ENCODE measurements at regions of chr6 and their contacts with region 1.

Region 1: DNA sequence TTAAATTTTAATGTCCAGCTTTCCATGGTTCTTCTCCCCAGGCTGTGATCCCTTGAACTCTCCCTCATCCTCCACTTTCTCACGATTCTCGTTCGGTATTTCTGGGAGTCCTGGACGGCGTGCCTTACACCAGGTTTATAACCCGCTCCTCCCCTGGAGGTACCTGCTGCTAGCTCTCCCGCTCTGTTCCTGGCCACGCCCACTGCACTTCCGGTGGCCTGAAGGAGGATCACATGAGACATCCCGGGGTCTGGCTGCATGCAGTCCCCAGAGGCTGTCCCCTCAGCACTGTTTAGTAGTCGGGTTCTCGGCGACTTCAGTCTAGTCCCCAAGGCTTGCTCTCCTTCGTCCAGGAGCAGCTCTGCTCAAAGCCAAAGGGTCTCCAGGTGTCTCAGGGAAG is 28.4 kb upstream of the GCLC start:
- DNase-seq: no peak
- H3K4me3 ChIP-seq: no peak overlapping the region
- H3K27ac ChIP-seq: no peak overlapping the region
- H3K4me1 ChIP-seq: no peaks in the 10 kb centered on the region
- H3K27me3 ChIP-seq: no peaks in the 10 kb centered on the region
- CTCF ChIP-seq: no peak
- POLR2A ChIP-seq: no peak

Region 2: GRCh38 chr6:53587291-53587690 is 14.0 kb after region 1 on chr6:
- CTCF ChIA-PET with region 1: no interaction called
- POLR2A ChIA-PET with region 1: interaction called, 11 read pairs
- dilution Hi-C with region 1: no loop called
- intact Hi-C with region 1: no loop called
- DNase-seq: no peak
- H3K4me3 ChIP-seq: no peak overlapping the region
- H3K27ac ChIP-seq: no peak overlapping the region
- H3K4me1 ChIP-seq: no peaks in the 10 kb centered on the region
- H3K27me3 ChIP-seq: peaks cover 1 to 2% of the 10 kb centered on the region in 2 experiments
- CTCF ChIP-seq: no peak
- POLR2A ChIP-seq: no peak

Measured in endothelial cell of umbilical vein (primary cell).